ENCODE measurements at regions of chr7 and their contacts with region 1.

Region 1: GRCh38 chr7:135795846-135796570 is 47.4 kb upstream of the FAM180A start:
- DNase-seq: peak; percentile 39
- H3K4me3 ChIP-seq: no peak overlapping the region
- H3K27ac ChIP-seq: no peak overlapping the region
- H3K4me1 ChIP-seq: no peaks in the 10 kb centered on the region
- H3K27me3 ChIP-seq: no peaks in the 10 kb centered on the region
- CTCF ChIP-seq: no peak

Region 2: DNA sequence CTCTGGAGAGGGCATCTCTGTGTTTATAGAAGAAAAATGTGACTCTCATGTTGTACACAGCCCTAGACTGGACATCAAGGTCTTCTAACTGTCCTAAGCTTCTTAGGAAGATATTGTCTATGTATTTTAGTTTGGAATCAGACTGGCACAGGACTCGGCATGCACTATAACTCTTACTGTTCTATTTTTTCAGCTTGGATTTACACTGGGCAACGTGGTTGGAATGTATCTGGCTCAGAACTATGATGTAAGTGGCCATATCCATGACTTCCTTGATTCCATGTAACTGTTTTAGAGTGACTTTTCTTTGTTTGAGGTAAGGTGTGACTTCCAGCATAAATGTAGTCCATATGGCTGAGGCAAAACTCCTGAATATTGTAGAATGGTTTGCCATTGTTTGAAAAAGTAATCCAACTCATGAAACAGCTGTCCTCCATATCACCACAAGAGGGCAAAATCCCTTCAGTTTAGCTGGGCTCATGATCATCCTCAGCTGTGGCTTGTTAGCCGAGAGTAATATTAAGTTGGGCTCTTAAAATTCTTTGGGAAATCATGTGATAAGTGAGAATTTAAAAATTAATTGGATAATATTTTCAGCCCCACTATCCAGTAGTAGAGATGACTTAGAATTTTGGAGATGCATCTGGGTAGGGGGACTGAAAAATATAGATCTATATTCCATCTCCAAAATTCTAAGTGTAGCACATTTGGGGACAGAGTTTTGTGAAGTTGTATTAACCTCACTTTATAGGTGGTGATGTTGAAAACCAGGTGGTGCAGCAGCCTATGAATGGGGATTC is 123.2 kb before region 1 on chr7:
- CTCF ChIA-PET with region 1: interaction called, 4 read pairs
- dilution Hi-C with region 1: no loop called
- in situ Hi-C with region 1: loop called in 1 of 2 experiments (anchors 5 kb)
- intact Hi-C with region 1: loop called (anchors 1 kb)
- DNase-seq: peak; percentile 61
- H3K4me3 ChIP-seq: no peak overlapping the region
- H3K27ac ChIP-seq: peak overlapping the region; percentile 42
- H3K4me1 ChIP-seq: peaks cover 41% of the 10 kb centered on the region
- H3K27me3 ChIP-seq: no peaks in the 10 kb centered on the region
- CTCF ChIP-seq: peak; percentile 84 to 87

Region 3: DNA sequence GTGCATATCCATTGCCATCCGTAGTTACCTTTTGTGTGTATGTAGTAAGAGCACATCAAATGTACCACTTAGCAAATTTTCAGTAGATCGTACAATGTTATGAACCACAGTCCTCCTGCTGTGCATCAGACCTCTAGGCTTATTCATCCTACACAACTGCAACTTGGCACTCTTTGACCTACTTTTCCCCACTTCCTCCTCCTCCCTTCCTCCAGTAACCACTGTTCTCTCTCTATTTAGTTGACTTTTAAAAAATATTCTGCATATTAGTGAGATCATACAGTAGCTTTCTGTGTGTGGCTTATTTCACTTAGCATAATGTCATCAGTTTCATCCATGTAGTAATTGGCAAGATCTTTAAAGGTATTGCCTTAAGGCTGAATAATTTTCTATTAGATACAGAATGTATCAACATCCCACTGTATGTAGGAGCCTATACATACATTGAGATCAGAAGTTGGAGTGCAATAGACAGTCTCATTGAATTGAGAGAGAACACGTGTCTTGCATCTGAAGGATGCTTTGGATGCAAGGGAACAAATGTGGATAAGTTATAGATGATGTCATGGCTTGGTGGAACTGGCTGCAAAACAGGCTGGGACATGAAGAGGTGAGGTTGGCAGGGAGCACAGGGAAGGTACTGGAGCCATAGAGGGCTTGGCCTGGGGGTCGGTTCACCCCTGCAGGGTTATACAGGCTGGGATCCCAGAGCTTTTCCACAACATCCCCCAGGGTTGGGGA is 35.6 kb after region 1 on chr7:
- CTCF ChIA-PET with region 1: no interaction called
- dilution Hi-C with region 1: loop called (anchors 5 kb)
- in situ Hi-C with region 1: no loop called
- intact Hi-C with region 1: no loop called
- DNase-seq: no peak
- H3K4me3 ChIP-seq: no peak overlapping the region
- H3K27ac ChIP-seq: no peak overlapping the region
- H3K4me1 ChIP-seq: no peaks in the 10 kb centered on the region
- H3K27me3 ChIP-seq: peaks cover 3% of the 10 kb centered on the region
- CTCF ChIP-seq: no peak

Measured in mammary epithelial cell (primary cell).